ENCODE measurements at regions of chr2 and their contacts with region 1.

Region 1: DNA sequence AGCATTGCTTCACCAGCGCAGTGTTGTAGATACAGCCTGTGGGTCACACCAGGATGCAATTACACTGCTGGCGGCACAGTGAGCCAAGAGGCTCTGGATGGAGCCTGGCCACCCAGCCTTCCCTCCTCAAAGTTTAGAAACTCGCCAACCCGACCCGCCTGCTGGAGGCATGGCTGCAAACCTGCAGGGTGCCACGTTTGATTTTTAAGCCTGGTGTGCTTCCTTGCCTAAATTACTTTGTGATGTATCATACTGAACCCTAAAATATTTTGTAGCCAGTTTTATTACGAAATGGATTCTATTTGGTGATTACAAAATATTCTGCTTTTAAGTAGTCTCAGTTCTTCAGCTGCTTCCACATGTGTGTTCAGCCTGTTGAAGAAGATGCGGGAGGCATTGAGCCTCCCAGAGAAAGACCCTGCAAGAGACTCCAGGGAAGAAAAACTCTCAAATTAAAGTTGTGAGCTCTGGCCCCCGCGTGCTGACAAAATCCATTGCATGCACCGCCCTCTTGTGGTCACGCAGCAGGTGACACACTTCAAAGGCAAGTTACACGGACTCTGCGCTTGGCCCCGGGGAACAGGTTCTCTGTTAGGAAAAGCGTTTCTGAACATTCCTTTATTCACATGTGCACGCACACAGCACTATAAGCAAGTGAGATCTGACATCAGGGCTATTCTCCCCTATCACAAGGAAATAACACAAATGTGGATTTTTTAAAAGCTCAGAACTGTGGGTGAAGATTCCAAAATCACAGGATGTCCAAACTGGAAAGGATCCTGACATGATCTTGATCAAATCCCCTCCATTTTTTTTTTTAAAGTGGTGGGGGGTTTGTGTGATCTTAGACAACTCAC is 63.0 kb upstream of the TWIST2 start:
- DNase-seq: peak; percentile 51 to 81 (median 72)
- H3K4me3 ChIP-seq: no peak overlapping the region
- H3K27ac ChIP-seq: no peak overlapping the region
- H3K27me3 ChIP-seq: peaks cover 0 to 6% (median 0%) of the 10 kb centered on the region in 45 donors
- CTCF ChIP-seq: peak; percentile 74 to 97 (median 92)

Region 2: DNA sequence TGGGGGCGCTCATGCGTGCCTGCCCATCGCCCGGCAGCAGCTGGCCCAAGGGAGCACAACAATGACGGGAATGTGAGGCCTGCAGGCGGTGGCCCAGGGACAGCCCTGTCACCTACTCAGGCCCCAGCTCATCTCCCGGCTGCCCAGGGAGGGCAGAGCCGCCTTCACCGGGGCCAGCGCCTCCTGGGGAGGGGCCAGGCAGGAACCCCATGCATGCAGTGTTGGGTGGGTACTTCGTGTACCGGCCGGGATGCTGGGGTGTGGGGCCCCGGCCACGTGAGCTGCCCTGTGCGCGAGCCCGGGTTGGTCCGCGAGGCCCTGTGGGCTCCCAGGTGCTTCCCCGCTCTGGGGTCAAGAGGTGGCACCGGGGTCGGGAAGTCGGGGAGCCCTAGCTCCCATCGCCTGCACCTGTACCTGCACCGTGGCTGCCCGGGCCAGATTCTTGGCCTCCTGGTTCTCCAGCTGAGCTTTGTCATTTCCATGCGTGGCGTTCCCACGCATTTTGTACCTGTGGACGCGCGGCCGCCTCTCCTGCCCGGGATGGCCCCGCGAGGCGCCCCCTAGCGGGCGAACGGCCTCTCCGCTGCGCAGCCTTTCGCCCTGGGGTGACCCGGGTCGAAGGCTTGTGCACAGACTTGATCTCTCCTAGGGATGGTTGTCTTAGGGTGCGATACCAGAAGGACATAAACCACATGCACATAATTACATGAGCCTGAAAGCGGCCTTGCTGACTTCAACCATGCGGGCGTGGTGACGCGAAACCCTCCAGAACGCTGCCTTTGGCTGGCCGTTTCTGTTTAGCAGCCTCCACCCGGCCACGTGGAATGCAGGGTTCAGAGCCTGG is 645.5 kb before region 1 on chr2:
- intact Hi-C with region 1: no loop called
- DNase-seq: no peak
- H3K4me3 ChIP-seq: peak overlapping the region in 5 of 59 donors; percentile 3 to 32 (median 17)
- H3K27ac ChIP-seq: no peak overlapping the region
- H3K27me3 ChIP-seq: no peaks in the 10 kb centered on the region
- CTCF ChIP-seq: peak in 51 of 56 donors; percentile 23 to 66 (median 47)

Region 3: GRCh38 chr2:238352361-238352760 is 432.5 kb before region 1 on chr2:
- intact Hi-C with region 1: loop called (anchors 10 kb)
- DNase-seq: no peak
- H3K4me3 ChIP-seq: no peak overlapping the region
- H3K27ac ChIP-seq: no peak overlapping the region
- H3K27me3 ChIP-seq: no peaks in the 10 kb centered on the region
- CTCF ChIP-seq: no peak

Region 4: DNA sequence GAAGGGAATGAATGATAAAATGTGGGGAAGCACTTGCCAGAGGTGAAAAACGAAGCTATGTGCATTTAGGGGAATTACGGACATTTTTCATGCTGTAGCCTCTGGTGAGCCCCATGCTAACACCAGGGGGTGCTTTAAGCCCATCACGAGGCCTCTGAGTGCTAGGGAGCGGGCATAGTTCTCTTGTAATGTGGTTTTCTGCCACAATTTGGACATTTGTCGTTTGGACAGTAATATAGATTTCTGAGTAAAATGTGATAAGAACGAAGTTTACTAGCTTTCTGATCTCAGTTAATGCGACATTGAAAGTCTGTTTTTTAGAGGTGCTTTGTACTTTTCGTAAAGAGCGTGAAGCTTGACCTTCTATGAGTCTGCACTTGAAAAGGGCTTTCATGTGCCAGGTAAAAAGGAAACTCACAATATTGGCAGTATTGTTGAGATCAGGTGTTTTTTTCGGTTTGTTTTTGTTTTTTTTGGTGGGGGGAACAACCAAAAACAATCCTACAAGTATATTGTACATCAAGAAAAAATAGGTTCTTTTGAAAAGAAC is 414.0 kb before region 1 on chr2:
- intact Hi-C with region 1: loop called (anchors 2 to 5 kb)
- DNase-seq: peak in 6 of 10 donors; percentile 49 to 63 (median 54)
- H3K4me3 ChIP-seq: no peak overlapping the region
- H3K27ac ChIP-seq: no peak overlapping the region
- H3K27me3 ChIP-seq: no peaks in the 10 kb centered on the region
- CTCF ChIP-seq: peak in 55 of 56 donors; percentile 33 to 83 (median 68)

Region 5: DNA sequence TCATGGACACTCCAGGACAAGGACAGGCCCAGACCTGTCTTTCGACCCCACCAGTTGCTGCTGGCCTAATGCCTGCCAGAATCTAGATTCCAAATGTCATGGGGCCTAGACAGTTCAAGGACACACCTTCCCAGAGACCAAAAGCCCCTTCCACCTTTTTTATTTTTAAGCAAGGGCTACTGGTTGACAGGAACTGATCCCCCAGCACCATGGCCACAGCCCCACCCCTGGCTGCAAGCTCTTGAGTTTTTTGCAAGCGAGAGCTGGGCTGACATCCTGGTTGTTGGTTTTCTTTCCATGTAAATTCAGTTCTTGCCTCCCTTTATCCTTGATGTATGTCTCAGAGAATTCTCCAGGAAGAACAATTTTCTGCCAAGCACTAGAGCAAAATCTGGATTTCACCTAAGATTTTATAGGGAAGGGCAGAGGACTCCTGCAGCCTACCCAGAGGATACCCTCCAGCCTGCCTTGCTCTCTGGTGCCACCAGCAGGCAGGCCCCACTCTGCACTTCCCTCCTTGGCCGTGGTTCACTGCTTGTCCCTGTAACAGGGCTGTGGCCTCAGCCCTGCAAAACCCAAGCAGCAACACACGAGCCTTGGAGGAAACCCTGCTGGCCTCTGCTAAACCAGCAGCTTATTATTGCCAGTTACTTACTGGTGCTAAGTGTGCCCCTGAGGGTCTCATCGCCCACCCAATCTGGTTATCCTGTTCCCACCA is 160.7 kb after region 1 on chr2:
- intact Hi-C with region 1: loop called in 1 of 2 experiments (anchors 5 kb)
- DNase-seq: peak in 4 of 10 donors; percentile 29 to 70 (median 60)
- H3K4me3 ChIP-seq: no peak overlapping the region
- H3K27ac ChIP-seq: no peak overlapping the region
- H3K27me3 ChIP-seq: peaks cover 0 to 4% (median 0%) of the 10 kb centered on the region in 45 donors
- CTCF ChIP-seq: peak in 54 of 56 donors; percentile 13 to 83 (median 64)